ENCODE measurements at regions of chr7 and their contacts with region 1.

Region 1: GRCh38 chr7:97117372-97118188 is at the start of gene SDHAF3:
- DNase-seq: peak; percentile 99
- H3K4me3 Mint-ChIP-seq: peak within 1 kb of the TSS; percentile 89
- H3K27ac Mint-ChIP-seq: peak within 1 kb of the TSS; percentile 92
- H3K4me1 Mint-ChIP-seq: peaks cover 39% of the 10 kb centered on the region
- H3K27me3 Mint-ChIP-seq: no peaks in the 10 kb centered on the region
- total RNA-seq, gene SDHAF3: 30.7 to 36.3 TPM

Region 2: GRCh38 chr7:96321658-96322372 is 795.8 kb before region 1 on chr7 and contains the start of gene SLC25A13:
- CTCF ChIA-PET with region 1: no interaction called
- intact Hi-C with region 1: loop called (anchors 2 kb)
- DNase-seq: peak; percentile 53
- H3K4me3 Mint-ChIP-seq: peak within 1 kb of the TSS; percentile 83
- H3K27ac Mint-ChIP-seq: peak within 1 kb of the TSS; percentile 89
- H3K4me1 Mint-ChIP-seq: peaks cover 34% of the 10 kb centered on the region
- H3K27me3 Mint-ChIP-seq: peaks cover 6% of the 10 kb centered on the region
- total RNA-seq, gene SLC25A13: 4.0 to 5.7 TPM

Region 3: DNA sequence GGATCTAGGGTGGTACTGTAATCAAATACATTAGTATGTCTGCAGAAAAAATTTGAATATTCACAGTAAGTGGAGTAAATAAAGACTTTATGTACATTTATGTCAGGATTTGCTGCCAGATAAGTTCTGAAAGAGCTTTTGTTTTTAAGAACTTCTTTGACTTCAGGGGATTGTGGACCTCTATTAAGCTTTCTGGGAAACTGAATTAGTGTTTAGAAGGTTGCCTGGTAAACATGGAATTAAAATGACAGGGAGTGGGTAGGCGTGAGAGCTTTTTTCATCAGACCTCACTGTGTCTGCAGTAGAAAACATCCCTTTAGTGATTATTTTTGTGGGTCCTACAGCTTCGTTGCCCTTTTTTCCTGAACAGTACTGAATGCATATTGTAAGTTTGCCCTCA is 15.6 kb after region 1 on chr7:
- CTCF ChIA-PET with region 1: no interaction called
- intact Hi-C with region 1: no loop called
- DNase-seq: no peak
- H3K4me3 Mint-ChIP-seq: no peak overlapping the region
- H3K27ac Mint-ChIP-seq: no peak overlapping the region
- H3K4me1 Mint-ChIP-seq: peaks cover 19% of the 10 kb centered on the region
- H3K27me3 Mint-ChIP-seq: no peaks in the 10 kb centered on the region

Region 4: GRCh38 chr7:97167176-97167575 is 49.6 kb after region 1 on chr7:
- CTCF ChIA-PET with region 1: no interaction called
- intact Hi-C with region 1: loop called (anchors 1 kb)
- DNase-seq: peak; percentile 34
- H3K4me3 Mint-ChIP-seq: no peak overlapping the region
- H3K27ac Mint-ChIP-seq: peak overlapping the region; percentile 77
- H3K4me1 Mint-ChIP-seq: peaks cover 30% of the 10 kb centered on the region
- H3K27me3 Mint-ChIP-seq: no peaks in the 10 kb centered on the region

Region 5: DNA sequence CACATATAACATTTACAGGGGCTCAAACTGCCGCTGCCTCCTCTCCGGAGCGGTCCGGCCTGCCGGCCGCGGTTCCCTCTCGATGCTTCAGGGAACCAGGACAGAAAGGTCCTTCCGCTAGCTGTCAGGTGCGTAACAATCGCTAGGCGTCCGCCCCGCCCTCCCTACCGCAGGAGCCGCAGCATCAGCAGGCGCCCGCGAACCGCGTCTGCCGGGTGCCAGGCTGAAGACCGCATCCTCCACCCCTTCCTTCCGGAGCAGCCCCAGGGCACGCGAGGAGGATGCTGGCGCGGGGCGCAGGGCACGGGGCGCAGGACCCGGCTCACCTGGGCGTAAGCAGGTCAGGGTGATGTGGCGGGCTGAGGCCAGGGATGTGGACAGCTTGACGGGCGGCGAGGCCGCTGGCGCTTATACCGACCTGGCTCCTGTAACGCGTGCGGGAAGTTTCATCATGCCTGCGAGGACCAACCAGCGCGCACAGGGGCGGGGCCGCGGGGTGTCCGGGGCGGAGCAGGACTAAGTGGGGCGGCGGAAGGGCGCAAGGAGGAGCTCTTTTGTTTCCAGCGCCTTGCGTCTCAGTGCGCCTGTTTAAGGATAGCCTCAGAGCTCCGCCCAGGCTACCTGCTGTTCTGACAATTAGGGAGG is 754.6 kb after region 1 on chr7 and contains the start of gene ASNS:
- CTCF ChIA-PET with region 1: no interaction called
- intact Hi-C with region 1: loop called (anchors 1 kb)
- DNase-seq: peak; percentile 95
- H3K4me3 Mint-ChIP-seq: peak within 1 kb of the TSS; percentile 88
- H3K27ac Mint-ChIP-seq: peak within 1 kb of the TSS; percentile 93
- H3K4me1 Mint-ChIP-seq: peaks cover 25% of the 10 kb centered on the region
- H3K27me3 Mint-ChIP-seq: no peaks in the 10 kb centered on the region
- total RNA-seq, gene ASNS: 332 to 337 TPM

Region 6: GRCh38 chr7:98106647-98107445 is 989.3 kb after region 1 on chr7 and contains the start of gene LMTK2:
- CTCF ChIA-PET with region 1: no interaction called
- intact Hi-C with region 1: loop called (anchors 1 kb)
- DNase-seq: peak; percentile 96
- H3K4me3 Mint-ChIP-seq: peak within 1 kb of the TSS; percentile 94
- H3K27ac Mint-ChIP-seq: peak within 1 kb of the TSS; percentile 72
- H3K4me1 Mint-ChIP-seq: peaks cover 38% of the 10 kb centered on the region
- H3K27me3 Mint-ChIP-seq: peaks cover 8% of the 10 kb centered on the region
- total RNA-seq, gene LMTK2: 11.4 to 13.1 TPM